ENCODE measurements at regions of chr3 and their contacts with region 1.

Region 1: GRCh38 chr3:114383875-114384557 is 90.2 kb downstream of the TIGIT start:
- DNase-seq: no peak
- H3K4me3 ChIP-seq: peak overlapping the region; percentile 26 to 41
- H3K27ac ChIP-seq: peak overlapping the region; percentile 81
- H3K4me1 ChIP-seq: peaks cover 28% of the 10 kb centered on the region
- H3K27me3 ChIP-seq: no peaks in the 10 kb centered on the region
- CTCF ChIP-seq: peak; percentile 58 to 79 (median 76)
- POLR2A ChIP-seq: no peak

Region 2: GRCh38 chr3:114454551-114455251 is 70.7 kb after region 1 on chr3:
- intact Hi-C with region 1: no loop called
- DNase-seq: no peak
- H3K4me3 ChIP-seq: peak overlapping the region; percentile 29 to 49
- H3K27ac ChIP-seq: peak overlapping the region; percentile 79
- H3K4me1 ChIP-seq: peaks cover 15% of the 10 kb centered on the region
- H3K27me3 ChIP-seq: no peaks in the 10 kb centered on the region
- CTCF ChIP-seq: peak in 2 of 3 experiments; percentile 42 to 90
- POLR2A ChIP-seq: no peak

Region 3: DNA sequence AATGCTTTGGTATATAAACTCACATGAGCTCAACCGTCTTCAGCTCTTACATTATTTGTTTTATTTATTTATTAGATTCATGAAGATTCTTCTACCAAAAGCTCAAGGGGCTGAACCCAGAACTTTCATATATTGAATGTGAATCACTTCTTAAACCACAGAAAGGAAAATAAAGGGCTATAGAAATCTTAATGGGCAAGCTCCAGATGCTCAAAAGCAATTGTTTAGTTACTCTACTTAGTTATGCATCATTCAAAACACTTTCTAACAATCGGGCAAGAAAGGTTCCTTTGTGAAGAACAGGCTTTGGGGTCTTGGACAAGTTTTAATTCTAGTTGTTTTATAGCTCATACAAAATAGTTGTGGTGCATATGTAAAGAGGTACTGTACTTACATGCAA is 290.0 kb after region 1 on chr3:
- intact Hi-C with region 1: no loop called
- DNase-seq: no peak
- H3K4me3 ChIP-seq: no peak overlapping the region
- H3K27ac ChIP-seq: no peak overlapping the region
- H3K4me1 ChIP-seq: no peaks in the 10 kb centered on the region
- H3K27me3 ChIP-seq: no peaks in the 10 kb centered on the region
- CTCF ChIP-seq: no peak
- POLR2A ChIP-seq: no peak

Region 4: DNA sequence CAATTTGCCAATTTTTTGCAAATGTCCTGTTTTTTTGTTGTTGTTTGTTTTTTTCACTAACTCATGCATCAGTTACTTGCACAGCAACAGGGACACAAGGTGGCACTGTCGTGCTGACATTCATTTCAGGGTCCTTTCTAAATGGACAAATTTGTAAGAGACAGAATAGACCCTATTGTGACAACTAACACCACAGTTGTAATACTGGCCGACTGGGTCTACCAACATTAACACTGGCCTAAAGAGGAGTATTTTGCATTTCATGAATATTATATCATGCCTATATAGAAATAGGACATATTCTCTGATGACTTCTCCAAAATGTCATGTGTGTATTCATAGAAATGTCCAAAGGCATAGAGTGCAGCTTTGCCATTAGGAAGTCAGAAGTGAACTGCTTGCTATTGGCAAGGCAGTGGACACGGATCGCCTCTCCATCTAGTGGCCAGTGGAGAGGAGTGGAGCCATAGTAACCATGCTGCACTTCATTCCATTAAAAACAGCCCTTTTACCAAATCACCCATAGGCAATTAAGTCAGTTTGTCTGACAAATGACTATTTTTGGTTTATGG is 708.3 kb after region 1 on chr3:
- intact Hi-C with region 1: loop called (anchors 10 kb)
- DNase-seq: no peak
- H3K4me3 ChIP-seq: no peak overlapping the region
- H3K27ac ChIP-seq: peak overlapping the region; percentile 41
- H3K4me1 ChIP-seq: peaks cover 21% of the 10 kb centered on the region
- H3K27me3 ChIP-seq: no peaks in the 10 kb centered on the region
- CTCF ChIP-seq: peak in 2 of 3 experiments; percentile 42 to 80
- POLR2A ChIP-seq: no peak

Measured in vagina (tissue), 2 donors.